Left cardiac atrium (tissue), 4 donors: ENCODE measurements at regions of chr12 and their contacts with region 1.

Region 1: DNA sequence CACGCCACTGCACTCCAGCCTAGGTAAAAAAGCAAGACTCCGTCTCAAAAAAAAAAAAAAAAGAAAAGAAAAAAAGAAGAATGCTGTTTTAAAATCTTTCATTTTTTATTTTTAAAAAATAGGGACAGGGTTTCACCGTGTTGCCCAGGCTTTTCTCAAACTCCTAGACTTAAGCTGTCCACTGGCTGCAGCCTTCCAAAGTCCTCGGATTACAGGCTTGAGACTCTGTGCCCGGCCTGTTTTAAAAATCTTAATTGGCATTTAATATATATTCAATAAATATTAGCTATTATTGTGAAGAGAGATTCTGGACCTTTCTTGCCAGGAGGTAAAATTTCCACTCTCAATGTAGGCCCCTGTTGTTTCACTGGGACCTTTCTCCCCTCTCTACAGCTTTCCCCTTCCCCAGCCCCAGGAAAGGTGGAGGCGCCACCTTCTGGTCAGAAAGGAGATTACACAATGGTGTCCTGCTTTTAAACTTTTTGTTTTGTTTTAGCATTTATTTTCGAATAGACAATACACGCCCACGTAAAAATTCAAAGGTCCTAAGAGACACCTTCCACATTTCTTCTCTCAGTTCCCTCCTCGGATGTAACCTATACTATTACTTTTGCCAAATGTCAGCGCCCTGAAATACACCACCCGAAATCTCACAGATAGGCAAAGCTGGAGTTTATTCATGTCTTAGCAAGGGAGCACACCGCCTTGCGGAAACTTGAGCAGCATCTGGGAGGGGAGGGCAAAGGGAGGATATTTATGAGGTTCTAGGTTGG is 23.8 kb upstream of the PHC1 start:
- DNase-seq: peak; percentile 37
- ATAC-seq: peak; percentile 81 to 84

Region 2: DNA sequence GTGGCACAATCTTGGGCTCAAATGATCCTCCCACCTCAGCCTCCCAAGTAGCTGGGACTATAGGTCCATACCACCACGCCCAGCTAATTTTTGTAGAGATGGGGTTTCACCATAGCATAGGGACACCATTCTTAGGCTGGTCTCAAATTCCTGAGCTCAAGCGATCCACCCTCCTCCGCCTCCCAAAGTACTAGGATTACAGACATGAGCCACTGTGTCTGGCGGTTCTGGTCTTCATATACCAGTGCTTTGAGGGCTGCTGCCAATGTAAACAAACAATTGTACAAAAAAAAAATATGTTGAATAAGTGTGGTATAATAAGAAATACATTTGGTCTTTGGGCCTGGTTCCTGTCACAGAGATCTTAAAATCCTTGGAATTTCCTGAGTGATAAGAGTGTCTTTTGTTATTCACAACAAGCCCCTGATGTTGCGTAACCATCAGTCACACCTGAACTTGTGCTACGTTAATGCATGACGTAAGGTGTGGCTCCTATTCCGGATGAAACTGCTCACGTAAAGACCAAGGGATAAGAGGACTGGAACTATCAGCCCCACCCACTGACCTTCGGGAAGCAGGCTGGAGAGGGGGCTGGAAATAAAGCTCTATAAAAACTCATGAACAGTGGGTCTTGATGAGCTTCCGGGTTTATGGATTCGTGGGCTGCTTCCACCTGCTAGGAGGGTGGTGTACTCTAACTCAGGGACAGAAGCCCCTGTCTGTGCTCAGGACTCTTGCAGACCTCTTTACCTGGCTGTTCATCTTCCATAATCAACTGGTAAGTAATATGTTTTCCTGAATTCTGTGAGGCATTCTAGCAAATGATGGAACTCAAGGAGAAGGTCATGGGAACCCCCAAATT is 209.2 kb before region 1 on chr12:
- intact Hi-C with region 1: loop called (anchors 5 to 10 kb)
- DNase-seq: no peak
- ATAC-seq: peak; percentile 33 to 72

Region 3: DNA sequence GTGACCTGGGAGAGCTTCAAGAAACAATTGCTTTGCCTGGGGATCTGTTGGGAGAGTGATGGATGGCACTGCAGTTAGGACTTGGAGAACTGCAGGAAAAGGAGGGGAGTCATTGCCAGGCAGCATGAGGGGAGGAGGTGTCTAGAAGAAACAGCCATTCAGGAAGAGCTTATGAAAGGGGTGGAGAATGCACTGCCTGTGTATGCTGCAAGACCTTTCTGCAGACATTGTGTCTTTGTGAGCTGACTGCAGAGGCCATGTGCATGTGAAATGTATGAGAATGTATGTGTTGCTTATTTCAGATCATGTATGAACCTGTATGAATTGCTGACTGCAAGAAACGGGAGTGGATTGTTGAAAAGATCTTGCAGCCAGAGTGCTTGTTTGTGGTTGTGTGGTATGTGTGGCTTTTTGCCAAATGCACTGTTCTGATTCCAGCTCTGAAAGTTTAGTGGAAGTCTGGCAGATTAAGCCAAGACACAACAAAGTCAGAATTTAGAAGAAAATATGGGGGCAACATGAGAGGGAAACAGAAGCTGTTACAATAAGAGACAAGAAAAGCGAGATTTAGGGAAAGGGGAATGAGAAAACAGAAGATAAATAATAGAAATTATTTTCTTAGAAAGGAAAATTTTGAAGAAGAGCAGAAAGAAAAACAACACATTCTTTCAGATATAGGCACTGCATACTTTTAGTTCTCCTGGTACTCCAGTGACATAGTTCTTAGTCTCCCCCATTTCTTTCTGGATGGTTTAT is 202.5 kb before region 1 on chr12:
- intact Hi-C with region 1: loop called (anchors 5 to 10 kb)
- DNase-seq: peak; percentile 35
- ATAC-seq: peak; percentile 95 to 98

Region 4: DNA sequence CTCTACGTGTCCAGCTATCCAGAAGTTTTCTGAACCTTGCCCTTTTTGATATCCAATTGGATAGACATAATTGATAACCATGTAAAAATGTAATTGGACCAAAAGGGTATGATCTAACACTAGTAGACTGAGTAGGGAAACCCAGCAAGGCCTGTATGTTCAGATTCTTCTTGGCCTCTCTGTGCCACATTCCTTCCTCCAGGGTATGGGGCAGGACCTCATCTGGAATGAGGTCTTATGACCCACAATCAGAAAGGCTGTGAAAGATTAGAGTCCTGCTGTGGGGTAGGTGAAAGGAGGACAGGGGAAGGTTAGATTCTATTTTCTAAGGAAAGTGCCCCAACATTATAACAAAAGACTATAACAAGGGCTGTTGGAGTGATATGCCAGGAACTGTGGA is 119.4 kb before region 1 on chr12:
- intact Hi-C with region 1: loop called in 1 of 2 experiments (anchors 10 kb)
- DNase-seq: no peak
- ATAC-seq: no peak